ENCODE measurements at regions of chr1 and their contacts with region 1.

Region 1: GRCh38 chr1:111139956-111140679 is at the starts of genes CEPT1 and DRAM2:
- DNase-seq: peak; percentile 96
- ATAC-seq: peak; percentile 80
- H3K4me3 ChIP-seq: peak within 1 kb of the TSS; percentile 89 to 96 (median 93)
- H3K4me3 Mint-ChIP-seq: peak within 1 kb of the TSS; percentile 100
- H3K27ac ChIP-seq: peak within 1 kb of the TSS; percentile 84 to 93
- H3K27ac Mint-ChIP-seq: peak within 1 kb of the TSS; percentile 99
- H3K4me1 ChIP-seq: peaks cover 55 to 62% of the 10 kb centered on the region in 2 donors
- H3K4me1 Mint-ChIP-seq: peaks cover 62% of the 10 kb centered on the region
- H3K27me3 ChIP-seq: no peaks in the 10 kb centered on the region
- H3K27me3 Mint-ChIP-seq: no peaks in the 10 kb centered on the region
- CTCF ChIP-seq: no peak
- total RNA-seq, gene CEPT1: 83.5 and 86.5 TPM in 2 replicates
- total RNA-seq, gene DRAM2: 102 and 108 TPM in 2 replicates

Region 2: GRCh38 chr1:111030590-111030989 is 109.5 kb before region 1 on chr1:
- CTCF ChIA-PET with region 1: interaction called, 10 read pairs
- POLR2A ChIA-PET with region 1: no interaction called
- intact Hi-C with region 1: loop called (anchors 5 kb)
- DNase-seq: peak; percentile 77
- ATAC-seq: peak; percentile 56
- H3K4me3 ChIP-seq: no peak overlapping the region
- H3K4me3 Mint-ChIP-seq: no peak overlapping the region
- H3K27ac ChIP-seq: no peak overlapping the region
- H3K27ac Mint-ChIP-seq: no peak overlapping the region
- H3K4me1 ChIP-seq: peaks cover 0 to 5% of the 10 kb centered on the region in 2 donors
- H3K4me1 Mint-ChIP-seq: peaks cover 15% of the 10 kb centered on the region
- H3K27me3 ChIP-seq: no peaks in the 10 kb centered on the region
- H3K27me3 Mint-ChIP-seq: peaks cover 3% of the 10 kb centered on the region
- CTCF ChIP-seq: peak; percentile 89

Region 3: DNA sequence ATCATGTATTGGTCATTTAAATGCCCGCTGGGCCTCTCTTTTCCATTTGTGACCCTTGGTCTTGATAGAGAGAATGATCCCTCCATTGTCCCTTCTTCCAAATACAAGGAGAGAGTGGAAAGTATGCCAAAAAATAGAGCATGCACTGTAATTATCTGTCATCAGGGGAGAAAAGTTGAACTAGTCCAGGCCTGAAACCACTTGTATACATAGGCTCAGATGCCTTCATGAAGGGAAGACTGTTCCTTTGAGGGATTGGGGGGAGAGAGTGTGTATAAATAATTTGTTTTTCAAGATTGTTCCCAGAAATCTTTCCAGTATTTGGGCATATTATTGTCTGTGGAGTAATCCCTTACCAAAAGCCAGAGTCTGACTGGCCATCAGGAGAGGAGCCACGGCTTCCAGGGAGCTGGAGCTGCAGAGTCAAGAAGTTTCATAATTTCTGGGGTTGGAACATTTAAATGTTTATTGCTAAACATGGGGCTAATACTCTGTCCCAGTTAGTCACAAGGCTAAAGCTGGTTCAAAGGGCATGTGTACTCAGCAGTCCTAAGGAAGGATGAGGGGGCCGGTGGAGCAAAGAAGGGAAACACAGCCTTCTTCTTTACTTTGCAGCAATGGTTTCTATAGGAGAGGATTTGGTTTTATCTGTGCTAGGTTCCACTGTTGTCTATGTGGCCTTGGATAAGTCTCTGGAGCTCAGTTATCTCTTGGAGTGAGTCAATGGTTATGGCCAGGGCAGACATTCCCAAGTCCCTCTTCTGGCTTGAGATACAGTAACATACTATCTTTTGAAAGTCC is 50.7 kb after region 1 on chr1:
- CTCF ChIA-PET with region 1: no interaction called
- POLR2A ChIA-PET with region 1: interaction called, 11 read pairs
- intact Hi-C with region 1: no loop called
- DNase-seq: no peak
- ATAC-seq: no peak
- H3K4me3 ChIP-seq: no peak overlapping the region
- H3K4me3 Mint-ChIP-seq: no peak overlapping the region
- H3K27ac ChIP-seq: peak overlapping the region in 1 of 2 donors; percentile 86
- H3K27ac Mint-ChIP-seq: peak overlapping the region; percentile 89
- H3K4me1 ChIP-seq: peaks cover 26 to 55% of the 10 kb centered on the region in 2 donors
- H3K4me1 Mint-ChIP-seq: peaks cover 66% of the 10 kb centered on the region
- H3K27me3 ChIP-seq: no peaks in the 10 kb centered on the region
- H3K27me3 Mint-ChIP-seq: no peaks in the 10 kb centered on the region
- CTCF ChIP-seq: no peak

Region 4: GRCh38 chr1:111214074-111214801 is 74.1 kb after region 1 on chr1:
- CTCF ChIA-PET with region 1: interaction called, 11 read pairs
- POLR2A ChIA-PET with region 1: interaction called, 3 read pairs
- intact Hi-C with region 1: loop called (anchors 1 kb)
- DNase-seq: peak; percentile 61
- ATAC-seq: no peak
- H3K4me3 ChIP-seq: peak overlapping the region in 1 of 5 experiments; percentile 42
- H3K4me3 Mint-ChIP-seq: peak overlapping the region; percentile 59
- H3K27ac ChIP-seq: peak overlapping the region; percentile 81 to 92
- H3K27ac Mint-ChIP-seq: peak overlapping the region; percentile 95
- H3K4me1 ChIP-seq: peaks cover 67 to 75% of the 10 kb centered on the region in 2 donors
- H3K4me1 Mint-ChIP-seq: peaks cover 78% of the 10 kb centered on the region
- H3K27me3 ChIP-seq: no peaks in the 10 kb centered on the region
- H3K27me3 Mint-ChIP-seq: no peaks in the 10 kb centered on the region
- CTCF ChIP-seq: no peak

Region 5: GRCh38 chr1:111406321-111406768 is 266.2 kb after region 1 on chr1:
- CTCF ChIA-PET with region 1: interaction called, 3 read pairs
- POLR2A ChIA-PET with region 1: no interaction called
- intact Hi-C with region 1: loop called (anchors 2 kb)
- DNase-seq: peak; percentile 83
- ATAC-seq: peak; percentile 96
- H3K4me3 ChIP-seq: no peak overlapping the region
- H3K4me3 Mint-ChIP-seq: peak overlapping the region; percentile 59
- H3K27ac ChIP-seq: peak overlapping the region; percentile 32 to 37
- H3K27ac Mint-ChIP-seq: peak overlapping the region; percentile 79
- H3K4me1 ChIP-seq: peaks cover 30 to 35% of the 10 kb centered on the region in 2 donors
- H3K4me1 Mint-ChIP-seq: peaks cover 37% of the 10 kb centered on the region
- H3K27me3 ChIP-seq: no peaks in the 10 kb centered on the region
- H3K27me3 Mint-ChIP-seq: no peaks in the 10 kb centered on the region
- CTCF ChIP-seq: no peak